ENCODE measurements at regions of chr10 and their contacts with region 1.

Region 1: DNA sequence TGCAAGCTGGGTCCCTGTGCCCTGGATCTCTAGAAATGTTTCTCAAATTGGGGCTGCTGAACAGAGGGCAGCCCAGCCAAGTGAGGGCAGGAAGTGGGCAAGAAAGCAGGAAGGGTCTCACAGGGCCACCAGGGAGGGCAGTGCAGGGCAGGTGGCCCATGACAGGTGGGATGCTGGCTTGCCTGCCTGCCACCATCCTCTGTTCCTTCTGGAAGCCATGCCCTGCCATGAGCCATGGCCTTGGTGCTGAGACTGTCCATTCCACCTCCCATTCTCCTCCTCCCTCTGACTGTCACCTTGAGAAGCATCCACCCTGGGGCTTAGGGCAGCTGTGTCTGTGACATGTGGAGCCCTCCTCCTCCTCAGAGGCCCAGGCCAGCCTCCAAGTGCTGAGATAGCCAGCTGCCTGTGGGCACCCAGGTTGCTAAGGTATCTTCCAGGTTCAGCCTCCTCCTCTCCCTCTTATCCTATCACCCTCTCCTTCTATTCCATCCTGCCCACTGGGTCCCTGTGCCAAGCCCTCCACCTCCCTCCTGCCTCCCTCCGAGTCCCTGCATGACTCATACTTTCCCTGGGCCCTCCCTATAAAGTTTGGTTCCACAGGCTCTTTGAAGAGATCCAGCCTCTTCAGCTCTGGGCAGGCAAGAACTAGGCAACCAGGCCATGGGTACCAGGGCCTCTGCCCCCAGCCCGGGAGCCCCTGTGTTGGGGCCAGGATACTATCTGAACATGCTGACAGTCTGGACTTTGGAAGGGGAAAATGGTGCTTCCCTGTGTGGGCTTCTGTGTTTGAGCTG is 1.3 kb downstream of the VSIR start:
- DNase-seq: peak; percentile 40 to 57
- ATAC-seq: peak; percentile 2 to 10; a peak in 3 of 6 replicates
- H3K4me3 ChIP-seq: peak overlapping the region; percentile 64; the same call in 2 of the 3 replicates
- H3K27ac ChIP-seq: peak overlapping the region; percentile 79 to 98
- H3K4me1 ChIP-seq: peaks cover 62% of the 10 kb centered on the region
- CTCF ChIP-seq: no peak
- EP300 ChIP-seq: no peak
- POLR2A ChIP-seq: no peak
- RAD21 ChIP-seq: no peak

Region 2: GRCh38 chr10:71486484-71487114 is 285.4 kb before region 1 on chr10:
- CTCF ChIA-PET with region 1: no interaction called
- POLR2A ChIA-PET with region 1: no interaction called
- DNase-seq: peak in 1 of 2 experiments; percentile 23
- ATAC-seq: peak in 1 of 2 experiments; percentile 72; a peak in 3 of 6 replicates
- H3K4me3 ChIP-seq: no peak overlapping the region
- H3K27ac ChIP-seq: no peak overlapping the region
- H3K4me1 ChIP-seq: no peaks in the 10 kb centered on the region
- CTCF ChIP-seq: peak; percentile 37
- EP300 ChIP-seq: no peak
- POLR2A ChIP-seq: no peak
- RAD21 ChIP-seq: no peak

Region 3: GRCh38 chr10:71708301-71708703 is 63.7 kb before region 1 on chr10:
- CTCF ChIA-PET with region 1: interaction called, 18 read pairs
- POLR2A ChIA-PET with region 1: interaction called, 3 read pairs
- DNase-seq: peak; percentile 41 to 42
- ATAC-seq: peak; percentile 66 to 87
- H3K4me3 ChIP-seq: no peak overlapping the region
- H3K27ac ChIP-seq: peak overlapping the region in 1 of 2 experiments; percentile 52; a peak in 3 of 6 replicates
- H3K4me1 ChIP-seq: peaks cover 11% of the 10 kb centered on the region
- CTCF ChIP-seq: peak; percentile 74
- EP300 ChIP-seq: no peak
- POLR2A ChIP-seq: no peak
- RAD21 ChIP-seq: peak; percentile 79 to 83

Region 4: DNA sequence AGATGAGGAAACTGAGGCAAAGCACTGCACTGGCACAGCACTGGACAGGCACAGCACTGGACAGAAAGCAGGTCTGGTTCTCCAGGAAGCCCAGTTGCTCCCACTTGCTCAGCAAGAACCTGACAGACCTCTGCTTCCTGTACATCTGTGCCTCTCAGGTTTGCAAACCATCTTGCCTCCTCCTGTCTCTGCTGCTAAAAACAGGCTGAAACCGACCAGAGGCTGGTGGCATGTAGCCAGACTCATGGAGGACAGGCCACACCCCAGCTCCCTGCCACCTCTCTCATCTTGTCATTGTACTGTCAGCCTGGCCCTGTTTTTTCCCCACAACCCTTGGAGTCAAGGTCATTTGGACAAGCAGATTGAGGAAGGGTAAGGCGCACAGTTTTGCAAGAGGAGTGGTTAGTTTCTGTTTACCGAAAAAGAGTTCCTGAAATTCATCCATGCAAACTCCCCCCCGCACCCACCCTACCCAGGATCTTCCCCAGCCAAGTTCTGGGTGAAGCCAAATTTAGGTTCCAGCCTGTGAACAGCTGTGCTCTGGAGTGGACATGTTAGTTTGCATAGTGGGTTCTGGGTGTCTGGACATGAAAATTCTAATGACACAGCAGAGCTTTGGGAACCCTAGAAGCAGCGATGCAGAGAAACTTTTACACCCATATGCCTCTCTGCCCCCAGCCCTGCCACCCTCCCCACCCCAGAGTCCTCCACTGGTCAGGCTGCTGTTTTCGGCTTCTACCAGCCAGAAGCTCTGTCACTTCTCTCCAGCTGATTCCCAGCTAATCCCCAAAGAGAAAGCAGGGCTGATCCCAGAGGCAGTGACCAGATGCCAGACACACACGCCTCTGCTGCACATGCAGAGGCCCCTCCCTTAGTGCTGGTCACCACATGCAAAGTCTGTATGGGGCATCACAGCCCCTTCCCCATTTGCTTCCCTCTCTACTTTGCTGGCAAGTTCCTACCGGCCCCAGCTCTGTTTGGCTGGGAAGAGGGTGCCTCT is 44.0 kb before region 1 on chr10:
- CTCF ChIA-PET with region 1: interaction called, 31 read pairs
- POLR2A ChIA-PET with region 1: interaction called, 10 read pairs
- DNase-seq: peak; percentile 19 to 42
- ATAC-seq: peak in 1 of 2 experiments; percentile 18; a peak in 2 of 6 replicates
- H3K4me3 ChIP-seq: no peak overlapping the region
- H3K27ac ChIP-seq: peak overlapping the region; percentile 38 to 79; a peak in 4 of 6 replicates
- H3K4me1 ChIP-seq: peaks cover 33% of the 10 kb centered on the region
- CTCF ChIP-seq: no peak
- EP300 ChIP-seq: no peak
- POLR2A ChIP-seq: no peak
- RAD21 ChIP-seq: no peak

Region 5: GRCh38 chr10:71756311-71757191 is 15.5 kb before region 1 on chr10:
- CTCF ChIA-PET with region 1: interaction called, 41 read pairs
- POLR2A ChIA-PET with region 1: interaction called, 4 read pairs
- DNase-seq: no peak
- ATAC-seq: no peak
- H3K4me3 ChIP-seq: no peak overlapping the region
- H3K27ac ChIP-seq: peak overlapping the region in 1 of 2 experiments; percentile 74; a peak in 3 of 6 replicates
- H3K4me1 ChIP-seq: peaks cover 29% of the 10 kb centered on the region
- CTCF ChIP-seq: no peak
- EP300 ChIP-seq: no peak
- POLR2A ChIP-seq: no peak
- RAD21 ChIP-seq: no peak

Region 6: DNA sequence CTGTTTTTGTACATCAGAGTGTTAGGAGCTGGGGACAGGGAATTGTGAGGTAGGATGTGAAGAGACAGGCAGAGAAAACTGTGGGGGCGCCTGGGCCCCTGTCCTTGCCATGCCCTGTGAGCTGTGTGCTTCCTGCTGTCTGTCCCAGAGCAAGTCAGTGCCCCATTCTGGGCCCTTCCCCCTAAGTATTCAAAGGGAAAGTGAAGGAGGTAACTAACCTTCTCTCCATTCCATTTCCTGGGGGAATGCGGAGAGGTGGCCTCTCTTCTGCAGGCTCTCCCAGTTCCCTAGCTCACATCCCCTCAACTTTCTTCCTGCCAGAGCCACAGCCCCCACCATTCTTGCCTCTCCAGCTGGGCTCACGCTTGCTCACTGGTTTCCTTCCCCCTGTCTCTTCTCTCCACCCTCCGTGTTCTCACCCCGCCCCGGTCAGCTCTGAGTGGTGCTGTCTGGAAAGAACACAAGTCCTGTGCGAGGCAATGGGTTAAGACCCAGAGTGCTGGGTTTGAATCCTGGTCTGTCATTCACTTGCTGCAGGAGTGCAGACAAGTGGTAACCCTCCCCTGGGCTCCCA is 11.0 kb after region 1 on chr10:
- CTCF ChIA-PET with region 1: interaction called, 42 read pairs
- POLR2A ChIA-PET with region 1: interaction called, 3 read pairs
- DNase-seq: no peak
- ATAC-seq: peak; percentile 8 to 29; a peak in 2 of 6 replicates
- H3K4me3 ChIP-seq: no peak overlapping the region
- H3K27ac ChIP-seq: no peak overlapping the region
- H3K4me1 ChIP-seq: 0 out of 3 replicates have a peak, but pooled peaks cover 2% of the 10 kb centered on the region
- CTCF ChIP-seq: no peak
- EP300 ChIP-seq: no peak
- POLR2A ChIP-seq: no peak
- RAD21 ChIP-seq: no peak

Region 7: GRCh38 chr10:71812016-71812912 is 40.2 kb after region 1 on chr10:
- CTCF ChIA-PET with region 1: interaction called, 22 read pairs
- POLR2A ChIA-PET with region 1: interaction called, 5 read pairs
- DNase-seq: peak; percentile 61 to 82
- ATAC-seq: peak; percentile 61 to 89
- H3K4me3 ChIP-seq: no peak overlapping the region
- H3K27ac ChIP-seq: peak overlapping the region in 1 of 2 experiments; percentile 43; a peak in 3 of 6 replicates
- H3K4me1 ChIP-seq: peaks cover 18% of the 10 kb centered on the region; the same call in 2 of the 3 replicates
- CTCF ChIP-seq: peak; percentile 87
- EP300 ChIP-seq: no peak
- POLR2A ChIP-seq: no peak
- RAD21 ChIP-seq: peak; percentile 89 to 91

Measured in A549 (cell line).